OCI-LY7 (cell line): ENCODE measurements at regions of chr15 and their contacts with region 1.

Region 1: DNA sequence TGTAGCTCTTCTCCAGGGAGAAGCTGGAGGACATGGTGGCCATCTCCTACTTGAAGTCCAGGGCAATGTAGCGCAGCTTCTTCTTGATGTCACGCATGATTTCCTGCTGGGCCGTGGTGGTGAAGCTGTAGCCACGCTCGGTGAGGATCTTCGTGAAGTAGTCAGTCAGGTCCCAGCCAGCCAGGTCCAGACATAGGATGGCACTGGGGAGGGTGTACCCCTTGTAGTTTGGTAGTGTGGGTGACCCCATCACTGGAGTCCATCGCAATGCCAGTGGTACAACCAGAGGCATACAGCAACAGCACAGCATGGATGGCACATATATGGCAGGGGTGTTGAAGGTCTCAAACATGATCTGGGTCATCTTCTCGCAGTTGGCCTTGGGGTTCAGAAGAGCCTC is 7.0 kb upstream of the LPCAT4 start:
- DNase-seq: no peak
- H3K4me3 ChIP-seq: no peak overlapping the region
- H3K27ac ChIP-seq: no peak overlapping the region
- H3K4me1 ChIP-seq: no peaks in the 10 kb centered on the region
- CTCF ChIP-seq: no peak

Region 2: DNA sequence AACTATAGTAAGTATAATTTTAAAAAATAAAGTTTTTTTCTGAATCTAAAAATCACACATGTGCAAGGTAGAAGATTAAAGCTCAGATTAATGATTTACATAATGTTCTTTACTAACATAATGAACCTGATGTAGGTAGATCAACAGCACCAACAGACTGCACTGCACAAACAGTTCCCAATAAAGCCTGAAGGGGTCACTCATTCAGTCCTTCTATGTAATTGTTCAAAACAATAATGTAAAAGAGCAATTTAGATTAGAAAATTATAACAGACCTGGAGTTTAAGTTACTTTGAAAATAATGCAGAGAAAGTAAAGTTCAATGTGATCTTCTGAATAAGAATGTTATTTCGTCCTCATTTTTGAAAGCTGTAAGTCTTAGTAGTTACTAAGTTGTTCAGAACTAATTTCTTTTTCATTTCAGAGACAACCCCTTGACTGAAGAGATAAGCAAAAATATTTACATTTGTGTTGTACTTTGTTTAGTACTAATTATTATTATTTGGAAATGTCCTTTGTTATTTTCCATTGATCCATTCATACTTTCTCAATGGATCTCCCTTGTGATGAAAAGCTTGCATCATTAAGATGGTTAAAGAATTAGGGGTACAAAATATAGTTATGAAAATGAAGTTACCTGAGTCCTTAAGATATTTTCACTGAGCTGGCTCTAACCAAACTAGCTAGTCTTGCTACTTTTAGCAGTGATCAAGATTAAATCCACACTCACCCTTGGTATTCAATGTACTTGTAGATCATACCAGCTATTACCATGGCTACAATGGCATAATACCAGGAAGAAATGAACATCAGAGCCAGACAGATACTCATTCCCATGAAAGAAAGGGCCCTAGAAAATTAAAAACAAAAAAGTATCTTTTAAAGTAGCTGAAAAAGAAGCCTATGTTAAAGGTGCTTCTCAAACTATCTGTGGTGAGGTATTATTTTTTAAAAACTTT is 132.3 kb before region 1 on chr15:
- CTCF ChIA-PET with region 1: no interaction called
- POLR2A ChIA-PET with region 1: no interaction called
- intact Hi-C with region 1: loop called (anchors 5 kb)
- DNase-seq: peak; percentile 57
- H3K4me3 ChIP-seq: no peak overlapping the region
- H3K27ac ChIP-seq: no peak overlapping the region
- H3K4me1 ChIP-seq: no peaks in the 10 kb centered on the region
- CTCF ChIP-seq: peak; percentile 88